Panc1 (cell line): ENCODE measurements at regions of chrX and their contacts with region 1.

Region 1: GRCh38 chrX:48966796-48967579 is 4.7 kb downstream of the KCND1 start:
- DNase-seq: no peak
- ATAC-seq: no peak
- H3K4me3 ChIP-seq: no peak overlapping the region
- H3K27ac ChIP-seq: no peak overlapping the region
- H3K4me1 ChIP-seq: no peaks in the 10 kb centered on the region
- H3K27me3 ChIP-seq: no peaks in the 10 kb centered on the region
- CTCF ChIP-seq: no peak

Region 2: DNA sequence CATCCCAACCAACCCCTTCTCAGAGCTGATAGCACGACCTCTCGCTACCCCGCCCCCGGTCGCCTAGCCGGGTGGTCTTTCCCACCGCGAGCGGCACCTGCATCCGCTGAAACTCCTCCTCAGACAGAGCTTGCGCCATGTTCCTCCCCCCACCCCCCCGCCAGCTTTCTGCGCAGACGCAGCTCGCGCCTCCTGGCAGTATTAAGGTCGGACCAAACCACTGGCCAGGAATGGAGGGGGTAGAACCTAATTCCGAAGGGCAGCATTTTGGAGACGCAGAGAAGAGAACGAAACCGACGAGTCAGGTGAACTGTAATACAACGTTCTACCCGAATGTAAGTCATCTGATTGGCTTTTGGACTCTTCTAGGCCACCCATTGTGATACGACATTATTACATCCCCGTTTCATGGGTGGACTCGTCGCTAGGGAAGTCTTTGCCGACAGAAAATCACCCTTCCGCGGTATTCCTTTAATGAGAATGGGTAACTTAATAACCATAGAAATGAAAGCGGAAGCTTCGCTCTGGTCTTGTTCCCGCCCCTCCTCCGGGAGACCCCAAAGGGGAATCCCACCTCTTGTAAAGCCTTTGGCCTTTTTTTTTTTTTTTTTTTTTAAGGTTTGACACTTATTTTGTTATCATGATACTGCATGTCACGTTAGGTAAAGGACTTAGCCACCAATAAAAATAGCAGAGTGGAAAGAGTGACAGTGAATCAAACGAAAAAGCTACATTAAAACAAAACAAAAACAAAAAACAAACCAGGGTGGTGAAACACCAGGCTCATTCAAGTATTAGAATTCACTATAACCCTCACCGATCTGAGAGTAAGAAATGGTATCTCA is 35.3 kb after region 1 on chrX and contains the start of gene GRIPAP1:
- CTCF ChIA-PET with region 1: no interaction called
- POLR2A ChIA-PET with region 1: interaction called, 13 read pairs
- in situ Hi-C with region 1: no loop called
- intact Hi-C with region 1: no loop called
- DNase-seq: peak; percentile 67
- ATAC-seq: peak; percentile 90
- H3K4me3 ChIP-seq: peak within 1 kb of the TSS; percentile 94 to 99
- H3K27ac ChIP-seq: peak within 1 kb of the TSS; percentile 96
- H3K4me1 ChIP-seq: 0 out of 2 replicates have a peak, but pooled peaks cover 3% of the 10 kb centered on the region
- H3K27me3 ChIP-seq: no peaks in the 10 kb centered on the region
- CTCF ChIP-seq: no peak
- total RNA-seq, gene GRIPAP1: 51.0 TPM